Adrenal gland (tissue), 19 donors: ENCODE measurements at regions of chr20 and their contacts with region 1.

Region 1: DNA sequence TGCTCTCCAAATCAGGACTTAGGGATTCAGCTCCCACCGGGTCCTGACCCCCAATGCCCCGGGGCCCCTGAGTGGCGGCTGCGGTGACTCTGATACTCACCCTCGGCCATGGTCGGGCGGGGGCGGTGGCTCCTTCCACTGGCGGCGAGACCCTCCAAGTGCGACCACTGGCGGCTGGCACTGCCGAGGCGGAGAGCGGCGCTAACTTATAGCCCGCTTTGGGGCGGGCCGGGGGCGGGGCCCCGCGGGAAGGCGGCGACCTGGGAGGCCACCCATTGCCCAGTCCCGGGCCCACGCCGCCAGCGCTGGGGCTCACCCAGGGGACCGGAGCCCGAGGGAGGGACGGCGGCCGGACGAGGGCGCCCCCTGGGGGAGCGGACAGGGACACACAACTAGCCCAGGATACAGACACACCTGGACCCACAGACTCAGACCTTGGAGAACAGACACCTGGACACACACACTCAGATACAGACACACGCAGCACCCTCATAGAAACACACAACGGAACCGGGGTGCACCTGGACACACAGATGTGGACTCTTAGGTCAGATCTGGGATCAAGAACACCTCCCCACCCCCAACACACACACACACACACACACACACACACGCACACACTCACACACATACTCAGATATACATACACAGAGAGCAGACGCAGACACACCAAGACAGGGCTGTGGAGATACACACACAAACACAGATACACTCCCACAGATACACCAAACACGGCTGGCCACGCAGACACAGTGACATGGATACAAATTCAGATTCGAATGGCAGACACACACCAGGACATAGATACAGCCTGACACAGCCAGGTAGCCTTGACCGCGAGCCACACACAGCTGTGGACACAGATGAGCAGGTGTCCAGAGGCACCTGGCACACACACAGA is at the start of gene TGM2:
- DNase-seq: peak; percentile 78 to 88 (median 85)
- H3K4me3 ChIP-seq: peak within 1 kb of the TSS in 2 of 4 donors; percentile 45 to 72
- H3K27ac ChIP-seq: peak within 1 kb of the TSS in 3 of 5 donors; percentile 19 to 89 (median 60)
- H3K4me1 ChIP-seq: peaks cover 17 to 18% of the 10 kb centered on the region in 2 donors
- H3K27me3 ChIP-seq: no peaks in the 10 kb centered on the region
- CTCF ChIP-seq: peak; percentile 59 to 96 (median 91)
- POLR2A ChIP-seq: peak in 1 of 2 donors; percentile 27
- total RNA-seq, gene TGM2: 13.4 to 262 (median 108) TPM

Region 2: DNA sequence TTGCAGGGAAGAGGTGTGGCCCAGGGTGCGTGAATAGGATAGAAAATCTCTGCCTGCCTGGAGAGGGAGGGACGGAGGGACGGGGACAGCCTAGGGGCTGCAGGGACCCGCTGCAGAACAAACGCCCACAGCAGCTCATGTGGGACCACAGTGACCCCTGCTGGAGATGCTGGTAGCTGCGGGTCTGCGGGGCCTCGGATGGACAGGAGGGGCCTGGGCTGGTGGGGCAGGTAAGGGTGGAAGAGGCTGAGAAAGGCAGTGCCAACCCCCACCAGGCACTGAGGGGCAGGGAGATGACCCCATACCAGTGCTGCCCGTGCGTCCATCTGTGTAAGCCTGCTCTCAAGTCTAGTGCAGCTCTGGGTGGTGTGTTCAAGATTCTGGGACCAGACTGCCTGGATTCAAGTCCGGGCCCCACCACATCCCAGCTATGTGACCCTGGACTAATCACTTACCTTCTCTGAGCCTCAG is 55.8 kb after region 1 on chr20:
- intact Hi-C with region 1: loop called in 1 of 2 experiments (anchors 5 kb)
- DNase-seq: peak; percentile 49 to 84 (median 71)
- H3K4me3 ChIP-seq: no peak overlapping the region
- H3K27ac ChIP-seq: no peak overlapping the region
- H3K4me1 ChIP-seq: no peaks in the 10 kb centered on the region
- H3K27me3 ChIP-seq: no peaks in the 10 kb centered on the region
- CTCF ChIP-seq: peak; percentile 81 to 95 (median 86)
- POLR2A ChIP-seq: no peak